ENCODE measurements at regions of chr22 and their contacts with region 1.

Region 1: DNA sequence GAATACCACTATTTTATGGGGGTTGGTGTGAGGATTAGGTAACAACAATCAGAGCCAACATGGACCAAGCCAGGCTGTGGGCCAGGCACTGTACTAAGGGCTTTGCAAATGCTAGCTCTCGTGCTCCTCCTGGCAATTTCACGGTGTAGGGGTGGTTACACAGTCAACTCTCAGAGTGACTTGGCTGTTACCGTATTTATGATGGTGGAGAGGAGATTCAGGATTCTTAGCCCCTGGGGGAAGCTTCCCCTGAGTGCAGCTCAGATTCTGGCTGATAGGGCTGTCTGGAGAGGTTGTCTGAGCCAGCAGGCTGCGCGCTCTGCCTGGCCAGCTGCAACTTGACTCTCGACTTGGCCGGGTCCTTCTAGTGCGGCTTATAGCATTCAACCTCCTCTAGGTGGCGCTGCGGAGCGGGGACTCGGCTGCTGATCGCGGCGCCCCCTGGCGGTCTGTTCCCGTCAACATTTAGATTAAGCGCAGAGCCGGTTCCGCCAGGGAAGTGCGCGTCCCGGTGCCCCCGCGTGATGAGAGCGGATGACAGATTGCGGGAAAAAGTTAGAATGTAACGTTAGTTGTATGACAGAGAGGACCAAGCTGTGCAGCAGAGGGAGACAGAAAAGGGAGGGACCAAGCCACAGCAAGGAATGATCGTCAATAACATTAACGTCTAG is 4.5 kb upstream of the NCF4 start:
- DNase-seq: peak; percentile 94
- ATAC-seq: peak; percentile 97
- H3K4me3 Mint-ChIP-seq: peak overlapping the region; percentile 37
- H3K27ac Mint-ChIP-seq: peak overlapping the region; percentile 20; the same call in 1 of the 2 replicates
- H3K4me1 Mint-ChIP-seq: peaks cover 9% of the 10 kb centered on the region
- H3K27me3 Mint-ChIP-seq: peaks cover 29% of the 10 kb centered on the region
- CTCF ChIP-seq: peak; percentile 100

Region 2: GRCh38 chr22:36569999-36570398 is 286.3 kb before region 1 on chr22:
- CTCF ChIA-PET with region 1: interaction called, 10 read pairs
- POLR2A ChIA-PET with region 1: no interaction called
- DNase-seq: peak; percentile 74
- ATAC-seq: peak; percentile 96
- H3K4me3 Mint-ChIP-seq: no peak overlapping the region
- H3K27ac Mint-ChIP-seq: peak overlapping the region; percentile 85
- H3K4me1 Mint-ChIP-seq: peaks cover 7% of the 10 kb centered on the region
- H3K27me3 Mint-ChIP-seq: no peaks in the 10 kb centered on the region
- CTCF ChIP-seq: no peak

Region 3: GRCh38 chr22:36653316-36653715 is 202.9 kb before region 1 on chr22:
- CTCF ChIA-PET with region 1: no interaction called
- POLR2A ChIA-PET with region 1: no interaction called
- DNase-seq: no peak
- ATAC-seq: no peak
- H3K4me3 Mint-ChIP-seq: no peak overlapping the region
- H3K27ac Mint-ChIP-seq: no peak overlapping the region
- H3K4me1 Mint-ChIP-seq: no peaks in the 10 kb centered on the region
- H3K27me3 Mint-ChIP-seq: no peaks in the 10 kb centered on the region; the same call in 1 of the 2 replicates
- CTCF ChIP-seq: no peak

Region 4: DNA sequence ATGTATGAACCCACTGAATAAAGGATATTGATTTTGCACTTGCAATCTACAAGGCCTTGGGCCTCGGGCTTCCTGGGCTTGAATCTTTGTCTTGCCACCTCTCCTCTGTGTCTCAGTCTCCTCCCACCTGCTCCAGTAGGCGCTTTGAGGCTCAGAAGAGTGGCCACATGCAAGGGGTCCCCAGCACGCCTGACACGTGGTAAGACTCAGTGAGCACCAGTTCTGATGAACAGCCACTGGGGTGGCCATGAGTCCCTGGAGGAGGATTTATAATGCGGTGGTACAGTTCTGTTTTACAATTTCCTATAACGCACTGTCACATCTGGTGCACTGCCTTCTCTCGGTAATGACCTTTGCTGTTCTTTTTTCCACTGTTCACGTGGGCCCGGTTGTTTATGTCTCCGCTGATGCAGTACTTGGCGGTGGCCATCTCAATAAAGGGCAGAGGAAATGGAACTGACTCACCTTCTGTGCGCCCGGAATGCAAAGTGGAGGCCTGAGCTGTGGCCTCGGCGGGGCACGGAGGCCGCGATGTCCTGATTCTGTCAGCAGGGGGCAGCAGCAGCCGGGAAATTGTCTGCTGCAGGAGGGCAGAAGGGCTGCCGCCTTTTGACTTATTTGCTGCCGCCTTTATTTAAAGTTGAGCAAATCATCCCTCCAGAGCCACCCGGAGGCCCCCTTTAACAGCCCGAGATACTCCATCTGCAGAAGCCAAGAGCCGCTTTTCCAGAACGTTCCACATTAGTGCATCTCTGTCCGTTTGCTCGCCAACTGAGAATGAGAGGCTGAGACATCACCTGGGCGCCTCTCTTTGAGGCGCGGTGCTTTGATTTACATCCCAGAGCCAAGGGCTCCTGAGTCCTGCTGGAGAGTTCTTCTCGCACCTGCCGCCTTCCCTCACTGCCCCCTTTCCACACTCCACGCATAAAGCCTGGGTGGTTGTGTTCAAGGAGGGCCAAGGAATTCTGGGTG is 74.3 kb before region 1 on chr22:
- CTCF ChIA-PET with region 1: interaction called, 58 read pairs
- POLR2A ChIA-PET with region 1: no interaction called
- DNase-seq: peak; percentile 91
- ATAC-seq: peak; percentile 93
- H3K4me3 Mint-ChIP-seq: no peak overlapping the region; the same call in none of the 2 replicates
- H3K27ac Mint-ChIP-seq: no peak overlapping the region
- H3K4me1 Mint-ChIP-seq: peaks cover 23% of the 10 kb centered on the region
- H3K27me3 Mint-ChIP-seq: peaks cover 40% of the 10 kb centered on the region
- CTCF ChIP-seq: peak; percentile 82

Region 5: DNA sequence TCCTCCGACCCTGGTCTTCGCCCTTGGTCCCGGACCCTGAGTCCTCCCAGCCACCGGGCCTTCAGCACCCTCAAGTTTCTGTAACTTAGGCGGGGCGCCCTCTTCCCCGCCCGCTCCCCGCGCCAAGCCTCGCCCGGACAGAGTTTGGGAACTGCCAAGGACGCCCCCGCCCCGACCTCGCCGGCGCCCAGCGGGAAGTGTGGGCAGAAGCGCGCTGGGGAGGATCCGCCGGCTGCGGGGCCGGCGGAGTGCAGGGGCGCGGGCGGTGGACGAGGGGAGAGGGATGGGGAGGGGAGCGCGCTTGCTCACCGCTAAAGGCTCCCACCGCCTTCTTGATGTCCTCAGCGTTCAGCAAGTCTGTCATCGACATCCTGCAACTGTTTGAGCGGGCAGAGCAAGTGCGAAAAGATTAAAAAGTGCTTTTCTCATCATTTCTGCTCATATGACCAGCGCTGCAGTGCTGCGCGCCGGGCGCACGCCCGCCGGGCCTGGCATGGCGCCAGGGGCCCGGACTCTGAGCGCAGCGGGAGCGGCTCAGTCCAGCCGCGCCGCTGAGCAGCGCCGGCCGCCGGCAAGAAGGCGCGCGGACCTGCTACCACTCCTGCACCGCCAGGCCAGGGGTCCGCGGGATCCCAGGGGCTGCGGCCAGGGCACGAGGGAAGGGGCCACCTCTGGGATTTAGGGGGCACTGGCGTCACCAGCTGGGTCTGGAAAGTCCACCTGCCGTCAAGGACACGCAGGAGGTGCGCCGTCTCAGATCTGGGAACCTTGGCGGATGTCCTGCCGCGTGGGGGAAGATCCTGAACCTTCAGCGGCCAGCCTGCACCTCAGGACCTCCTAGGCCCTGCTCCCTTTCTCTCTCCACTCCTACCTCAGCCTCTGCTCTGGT is 39.4 kb before region 1 on chr22 and contains the start of gene PVALB:
- CTCF ChIA-PET with region 1: interaction called, 17 read pairs
- POLR2A ChIA-PET with region 1: no interaction called
- DNase-seq: peak; percentile 46
- ATAC-seq: peak; percentile 58
- H3K4me3 Mint-ChIP-seq: peak within 1 kb of the TSS; percentile 69
- H3K27ac Mint-ChIP-seq: no peak within 1 kb of the TSS
- H3K4me1 Mint-ChIP-seq: peaks cover 28% of the 10 kb centered on the region
- H3K27me3 Mint-ChIP-seq: peaks cover 52% of the 10 kb centered on the region
- CTCF ChIP-seq: no peak
- total RNA-seq, gene PVALB: 2.7 to 5.9 TPM (median 4.5 TPM) in 3 replicates

Region 6: GRCh38 chr22:36879775-36880174 is 23.5 kb after region 1 on chr22:
- CTCF ChIA-PET with region 1: interaction called, 10 read pairs
- POLR2A ChIA-PET with region 1: no interaction called
- DNase-seq: no peak
- ATAC-seq: no peak
- H3K4me3 Mint-ChIP-seq: no peak overlapping the region
- H3K27ac Mint-ChIP-seq: no peak overlapping the region
- H3K4me1 Mint-ChIP-seq: peaks cover 13% of the 10 kb centered on the region
- H3K27me3 Mint-ChIP-seq: peaks cover 3% of the 10 kb centered on the region
- CTCF ChIP-seq: no peak

Region 7: GRCh38 chr22:36998620-36999340 is 142.5 kb after region 1 on chr22:
- CTCF ChIA-PET with region 1: interaction called, 10 read pairs
- POLR2A ChIA-PET with region 1: no interaction called
- DNase-seq: peak; percentile 46
- ATAC-seq: peak; percentile 76
- H3K4me3 Mint-ChIP-seq: no peak overlapping the region
- H3K27ac Mint-ChIP-seq: no peak overlapping the region
- H3K4me1 Mint-ChIP-seq: peaks cover 8% of the 10 kb centered on the region
- H3K27me3 Mint-ChIP-seq: peaks cover 8% of the 10 kb centered on the region
- CTCF ChIP-seq: no peak; the same call in 1 of the 2 replicates

Region 8: GRCh38 chr22:37037669-37038068 is 181.4 kb after region 1 on chr22:
- CTCF ChIA-PET with region 1: no interaction called
- POLR2A ChIA-PET with region 1: no interaction called
- DNase-seq: no peak
- ATAC-seq: peak; percentile 53
- H3K4me3 Mint-ChIP-seq: no peak overlapping the region
- H3K27ac Mint-ChIP-seq: no peak overlapping the region
- H3K4me1 Mint-ChIP-seq: peaks cover 20% of the 10 kb centered on the region
- H3K27me3 Mint-ChIP-seq: peaks cover 11% of the 10 kb centered on the region
- CTCF ChIP-seq: no peak